ENCODE measurements at regions of chr6 and their contacts with region 1.

Region 1: DNA sequence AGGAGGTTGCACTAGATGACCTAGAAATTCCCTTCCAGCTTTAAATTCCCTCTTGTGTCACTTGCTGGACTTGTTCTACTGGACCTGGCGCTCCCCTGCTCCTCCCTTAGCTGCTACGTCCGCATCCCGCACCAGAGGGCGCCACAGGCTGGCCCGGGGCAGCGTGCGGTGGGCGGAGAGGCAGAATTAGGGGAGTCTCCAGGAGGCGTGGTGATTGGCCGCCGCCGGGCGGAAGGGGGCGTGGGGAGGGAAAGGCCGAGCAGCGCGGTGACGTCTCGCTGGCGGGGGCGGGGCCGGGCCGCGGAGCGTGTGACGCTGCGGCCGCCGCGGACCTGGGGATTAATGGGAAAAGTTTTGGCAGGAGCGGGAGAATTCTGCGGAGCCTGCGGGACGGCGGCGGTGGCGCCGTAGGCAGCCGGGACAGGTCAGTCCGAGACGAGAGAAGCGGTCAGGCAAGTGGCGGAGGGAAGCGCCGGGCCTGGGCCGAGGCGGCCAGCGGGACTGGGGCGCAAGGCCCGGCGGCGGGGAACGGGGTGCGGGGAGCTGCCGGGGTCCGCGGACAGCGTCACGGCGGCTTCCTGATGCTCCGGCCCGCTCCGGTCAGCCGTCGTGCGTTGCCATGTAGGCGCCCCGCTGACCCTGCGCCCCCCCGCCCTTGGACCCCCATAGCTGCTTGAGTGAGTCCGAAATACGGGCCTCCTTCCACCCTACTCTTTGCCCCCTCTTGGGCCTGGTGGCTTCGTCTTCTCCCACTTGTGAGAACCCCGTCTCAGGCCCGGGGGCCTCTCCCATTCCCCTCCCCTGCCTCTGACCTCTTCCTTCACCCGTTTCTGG is at the start of gene PPARD:
- DNase-seq: peak; percentile 90 to 97 (median 95)
- H3K4me3 ChIP-seq: peak within 1 kb of the TSS; percentile 69 to 96 (median 94)
- H3K4me3 Mint-ChIP-seq: peak within 1 kb of the TSS; percentile 96
- H3K27ac ChIP-seq: peak within 1 kb of the TSS in 1 of 2 donors; percentile 73
- H3K27ac Mint-ChIP-seq: peak within 1 kb of the TSS; percentile 88 to 98 (median 95)
- H3K4me1 ChIP-seq: peaks cover 14 to 18% of the 10 kb centered on the region in 2 donors
- H3K4me1 Mint-ChIP-seq: peaks cover 42% of the 10 kb centered on the region
- H3K27me3 ChIP-seq: peaks cover 6 to 18% of the 10 kb centered on the region in 2 donors
- H3K27me3 Mint-ChIP-seq: peaks cover 8 to 29% (median 21%) of the 10 kb centered on the region in 3 donors
- CTCF ChIP-seq: peak; percentile 97
- polyA plus RNA-seq, gene PPARD: 1.2 to 22.0 (median 2.4) TPM

Region 2: GRCh38 chr6:34953061-34954025 is 389.1 kb before region 1 on chr6:
- intact Hi-C with region 1: no loop called
- DNase-seq: no peak
- H3K4me3 ChIP-seq: no peak overlapping the region
- H3K4me3 Mint-ChIP-seq: no peak overlapping the region
- H3K27ac ChIP-seq: peak overlapping the region in 1 of 2 donors; percentile 17
- H3K27ac Mint-ChIP-seq: peak overlapping the region in 2 of 7 donors; percentile 48 to 54
- H3K4me1 ChIP-seq: peaks cover 14 to 15% of the 10 kb centered on the region in 2 donors
- H3K4me1 Mint-ChIP-seq: peaks cover 24% of the 10 kb centered on the region
- H3K27me3 ChIP-seq: no peaks in the 10 kb centered on the region
- H3K27me3 Mint-ChIP-seq: no peaks in the 10 kb centered on the region
- CTCF ChIP-seq: no peak

Region 3: DNA sequence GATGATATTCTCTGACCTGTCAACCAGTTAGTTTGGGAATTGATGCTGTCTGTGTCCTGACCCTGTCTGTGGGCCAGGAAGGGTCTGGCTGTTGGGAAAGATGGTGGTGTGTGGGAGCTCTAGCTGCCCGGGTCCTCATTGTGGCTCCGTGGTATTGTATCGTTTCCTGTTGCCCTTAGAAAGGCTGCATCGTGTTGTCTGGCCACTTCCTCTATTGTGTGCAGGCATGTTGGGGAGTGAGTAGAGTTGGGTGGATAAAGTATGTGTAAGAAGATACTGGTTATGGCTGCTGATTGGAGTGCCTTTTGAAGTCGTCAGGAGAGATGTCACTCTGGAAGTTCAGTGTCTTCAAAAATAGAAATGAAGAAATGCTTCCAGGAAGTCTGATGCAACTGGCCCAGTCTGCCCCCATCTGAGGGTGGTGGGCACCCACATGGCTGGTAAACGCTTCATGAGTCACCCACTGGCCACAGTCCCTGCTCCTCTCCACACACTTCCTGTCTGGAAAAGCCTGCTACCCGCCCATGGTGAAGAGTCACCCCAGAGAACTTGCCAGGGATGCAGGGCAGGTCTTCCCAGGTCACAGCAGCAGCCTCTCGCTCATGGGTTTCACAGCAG is 27.8 kb after region 1 on chr6:
- intact Hi-C with region 1: loop called in 1 of 2 experiments (anchors 2 kb)
- DNase-seq: peak; percentile 96 to 100 (median 99)
- H3K4me3 ChIP-seq: peak overlapping the region in 1 of 3 experiments; percentile 60
- H3K4me3 Mint-ChIP-seq: peak overlapping the region; percentile 58 to 88
- H3K27ac ChIP-seq: peak overlapping the region; percentile 91 to 98
- H3K27ac Mint-ChIP-seq: peak overlapping the region; percentile 97 to 99 (median 99)
- H3K4me1 ChIP-seq: peaks cover 48 to 52% of the 10 kb centered on the region in 2 donors
- H3K4me1 Mint-ChIP-seq: peaks cover 56% of the 10 kb centered on the region
- H3K27me3 ChIP-seq: peaks cover 0 to 7% of the 10 kb centered on the region in 2 donors
- H3K27me3 Mint-ChIP-seq: peaks cover 8 to 15% (median 14%) of the 10 kb centered on the region in 3 donors
- CTCF ChIP-seq: no peak

Region 4: DNA sequence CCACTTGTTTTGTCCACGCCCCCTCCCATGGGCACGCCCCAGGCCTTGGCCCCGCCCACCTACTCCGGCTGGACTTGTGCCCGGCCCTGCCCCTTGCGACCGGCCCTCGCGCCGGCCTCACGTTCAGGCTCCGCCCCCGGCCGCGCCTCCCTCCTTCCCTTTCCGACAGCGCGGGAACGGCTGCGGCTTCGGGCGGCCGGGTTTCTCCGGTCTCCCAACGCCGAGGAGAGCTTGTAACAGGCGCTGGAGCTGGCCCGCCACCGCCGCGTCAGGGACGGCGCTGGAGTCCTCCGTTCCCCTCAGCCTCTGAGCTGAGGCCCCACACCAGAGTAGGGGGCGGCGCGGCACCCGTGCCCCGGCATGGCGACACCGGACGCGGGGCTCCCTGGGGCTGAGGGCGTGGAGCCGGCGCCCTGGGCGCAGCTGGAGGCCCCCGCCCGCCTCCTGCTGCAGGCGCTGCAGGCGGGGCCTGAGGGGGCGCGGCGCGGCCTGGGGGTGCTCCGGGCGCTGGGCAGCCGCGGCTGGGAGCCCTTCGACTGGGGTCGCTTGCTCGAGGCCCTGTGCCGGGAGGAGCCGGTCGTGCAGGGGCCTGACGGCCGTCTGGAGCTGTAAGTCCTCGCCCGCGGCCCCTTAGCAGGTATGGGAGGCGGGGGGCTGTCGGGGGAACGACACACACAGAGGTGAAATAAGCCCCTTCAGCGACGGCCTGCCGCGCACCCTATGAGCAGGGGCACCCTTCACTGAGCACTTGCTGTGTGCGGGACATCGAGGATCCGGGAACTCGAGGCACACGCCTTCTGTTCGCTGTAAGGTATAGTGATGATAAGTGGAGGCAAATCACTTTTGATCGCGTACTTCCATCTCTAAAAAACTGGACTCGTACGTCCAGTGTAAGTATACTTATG is 110.0 kb after region 1 on chr6 and contains the start of gene FANCE:
- intact Hi-C with region 1: loop called (anchors 1 to 2 kb)
- DNase-seq: peak; percentile 88 to 93 (median 92)
- H3K4me3 ChIP-seq: peak within 1 kb of the TSS; percentile 53 to 84 (median 73)
- H3K4me3 Mint-ChIP-seq: peak within 1 kb of the TSS; percentile 82 to 86
- H3K27ac ChIP-seq: no peak within 1 kb of the TSS
- H3K27ac Mint-ChIP-seq: peak within 1 kb of the TSS in 5 of 7 donors; percentile 30 to 82 (median 68)
- H3K4me1 ChIP-seq: peaks cover 29 to 37% of the 10 kb centered on the region in 2 donors
- H3K4me1 Mint-ChIP-seq: peaks cover 37% of the 10 kb centered on the region
- H3K27me3 ChIP-seq: peaks cover 0 to 7% of the 10 kb centered on the region in 2 donors
- H3K27me3 Mint-ChIP-seq: peaks cover 12 to 23% (median 20%) of the 10 kb centered on the region in 3 donors
- CTCF ChIP-seq: no peak
- polyA plus RNA-seq, gene FANCE: 1.8 to 3.0 (median 2.9) TPM

Region 5: GRCh38 chr6:35468181-35468979 is 125.9 kb after region 1 on chr6 and contains the start of gene RPL10A:
- intact Hi-C with region 1: loop called (anchors 1 to 5 kb)
- DNase-seq: peak; percentile 96 to 97 (median 97)
- H3K4me3 ChIP-seq: peak within 1 kb of the TSS; percentile 80 to 99 (median 92)
- H3K4me3 Mint-ChIP-seq: peak within 1 kb of the TSS; percentile 98
- H3K27ac ChIP-seq: peak within 1 kb of the TSS; percentile 92 to 93
- H3K27ac Mint-ChIP-seq: peak within 1 kb of the TSS; percentile 96 to 99 (median 98)
- H3K4me1 ChIP-seq: peaks cover 23 to 30% of the 10 kb centered on the region in 2 donors
- H3K4me1 Mint-ChIP-seq: peaks cover 35% of the 10 kb centered on the region
- H3K27me3 ChIP-seq: no peaks in the 10 kb centered on the region
- H3K27me3 Mint-ChIP-seq: peaks cover 0 to 6% (median 0%) of the 10 kb centered on the region in 3 donors
- CTCF ChIP-seq: peak; percentile 92
- polyA plus RNA-seq, gene RPL10A: 345 to 1,242 (median 421) TPM